ENCODE measurements at regions of chr21 and their contacts with region 1.

Region 1: DNA sequence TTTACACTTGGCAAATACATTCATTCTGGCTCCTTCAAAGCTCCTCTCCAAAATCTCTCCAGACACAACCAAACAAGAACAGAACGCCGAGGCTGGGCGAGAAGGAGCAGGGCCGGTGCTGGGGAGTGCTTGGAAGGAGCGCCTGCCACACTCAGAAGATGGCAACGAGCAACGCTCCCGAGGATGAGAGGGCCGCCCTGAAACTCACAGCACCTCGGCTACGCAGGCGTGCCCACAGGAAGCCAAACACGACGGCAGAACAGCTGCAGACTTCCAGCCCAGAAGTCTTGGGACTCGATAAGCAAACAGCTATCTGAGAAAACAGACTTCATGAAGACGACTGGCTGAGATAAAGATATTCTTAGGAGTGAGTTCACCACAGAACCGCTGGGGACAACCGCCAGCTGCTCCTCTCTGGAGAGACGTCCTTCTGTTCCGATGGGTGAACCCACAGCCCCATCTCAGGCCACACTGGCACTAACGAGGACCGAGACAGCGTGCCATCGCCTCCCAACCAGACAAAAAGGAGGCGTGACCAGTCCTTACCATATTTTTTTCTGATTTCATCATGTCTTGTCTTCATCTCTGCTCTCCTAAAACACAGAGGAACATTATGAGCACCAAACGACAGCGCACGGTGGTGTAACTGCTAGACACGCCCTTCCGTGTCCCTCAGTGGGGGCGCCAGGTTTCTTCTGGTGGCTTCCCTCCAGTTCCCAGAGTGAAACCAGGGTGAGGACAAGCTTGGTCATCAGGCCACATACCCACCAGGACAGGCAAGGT is 18.6 kb downstream of the PTTG1IP start:
- DNase-seq: peak; percentile 87 to 98 (median 90)
- ATAC-seq: peak; percentile 94
- H3K4me3 ChIP-seq: no peak overlapping the region; the same call in 1 of the 2 replicates
- H3K27ac ChIP-seq: peak overlapping the region; percentile 81
- H3K4me1 ChIP-seq: peaks cover 35 to 57% of the 10 kb centered on the region in 2 experiments
- H3K27me3 ChIP-seq: no peaks in the 10 kb centered on the region
- CTCF ChIP-seq: peak; percentile 59 to 68 (median 66)
- EP300 ChIP-seq: peak; percentile 98
- POLR2A ChIP-seq: no peak
- RAD21 ChIP-seq: peak; percentile 49 to 64

Region 2: GRCh38 chr21:44601596-44602462 is 253.0 kb before region 1 on chr21:
- CTCF ChIA-PET with region 1: no interaction called
- POLR2A ChIA-PET with region 1: no interaction called
- in situ Hi-C with region 1: no loop called
- intact Hi-C with region 1: no loop called
- DNase-seq: no peak
- ATAC-seq: no peak
- H3K4me3 ChIP-seq: no peak overlapping the region
- H3K27ac ChIP-seq: no peak overlapping the region
- H3K4me1 ChIP-seq: peaks cover 0 to 16% of the 10 kb centered on the region in 2 experiments; a peak in 1 of 5 replicates
- H3K27me3 ChIP-seq: peaks cover 9 to 43% of the 10 kb centered on the region in 2 experiments
- CTCF ChIP-seq: no peak
- EP300 ChIP-seq: no peak
- POLR2A ChIP-seq: no peak
- RAD21 ChIP-seq: no peak

Region 3: GRCh38 chr21:44873356-44874239 is 18.7 kb after region 1 on chr21 and contains the start of gene PTTG1IP:
- CTCF ChIA-PET with region 1: no interaction called
- POLR2A ChIA-PET with region 1: interaction called, 7 read pairs
- in situ Hi-C with region 1: no loop called
- intact Hi-C with region 1: loop called (anchors 1 kb)
- DNase-seq: peak; percentile 100
- ATAC-seq: peak; percentile 85
- H3K4me3 ChIP-seq: peak within 1 kb of the TSS; percentile 67
- H3K27ac ChIP-seq: peak within 1 kb of the TSS; percentile 74
- H3K4me1 ChIP-seq: peaks cover 45 to 54% of the 10 kb centered on the region in 2 experiments
- H3K27me3 ChIP-seq: no peaks in the 10 kb centered on the region
- CTCF ChIP-seq: no peak
- EP300 ChIP-seq: no peak
- POLR2A ChIP-seq: peak; percentile 78
- RAD21 ChIP-seq: no peak; a peak in 1 of 4 replicates
- polyA plus RNA-seq, gene PTTG1IP: 5.0 to 9.2 TPM

Region 4: DNA sequence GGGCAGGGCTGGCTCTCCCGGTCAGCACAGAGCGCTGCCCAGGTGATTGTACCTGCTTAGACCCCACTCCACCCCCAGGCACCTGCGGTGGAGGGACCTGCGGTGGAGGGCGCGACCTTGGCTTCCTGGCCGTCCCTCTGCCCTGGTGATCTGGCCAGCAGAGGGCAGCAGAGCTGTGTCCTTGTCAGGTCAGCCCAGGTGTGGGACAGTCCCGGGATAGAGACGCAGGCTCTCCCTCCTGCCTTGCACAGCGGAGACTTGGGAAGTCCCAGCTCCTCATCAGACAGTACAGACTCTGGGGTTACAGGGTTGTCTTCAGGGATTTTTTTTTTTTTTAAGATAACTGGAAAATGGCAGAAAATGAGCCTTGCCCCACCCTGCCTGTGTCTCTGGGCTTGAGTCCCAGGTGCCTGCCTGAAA is 94.9 kb after region 1 on chr21:
- CTCF ChIA-PET with region 1: no interaction called
- POLR2A ChIA-PET with region 1: no interaction called
- in situ Hi-C with region 1: no loop called
- intact Hi-C with region 1: no loop called
- DNase-seq: peak; percentile 82 to 88 (median 84)
- ATAC-seq: peak; percentile 97
- H3K4me3 ChIP-seq: no peak overlapping the region
- H3K27ac ChIP-seq: no peak overlapping the region
- H3K4me1 ChIP-seq: peaks cover 0 to 71% of the 10 kb centered on the region in 2 experiments; a peak in 2 of 5 replicates
- H3K27me3 ChIP-seq: no peaks in the 10 kb centered on the region
- CTCF ChIP-seq: peak; percentile 90 to 97 (median 93)
- EP300 ChIP-seq: no peak
- POLR2A ChIP-seq: no peak
- RAD21 ChIP-seq: peak; percentile 83 to 91

Measured in K562 (cell line).